Transverse colon (tissue), 4 donors: ENCODE measurements at regions of chr11 and their contacts with region 1.

Region 1: DNA sequence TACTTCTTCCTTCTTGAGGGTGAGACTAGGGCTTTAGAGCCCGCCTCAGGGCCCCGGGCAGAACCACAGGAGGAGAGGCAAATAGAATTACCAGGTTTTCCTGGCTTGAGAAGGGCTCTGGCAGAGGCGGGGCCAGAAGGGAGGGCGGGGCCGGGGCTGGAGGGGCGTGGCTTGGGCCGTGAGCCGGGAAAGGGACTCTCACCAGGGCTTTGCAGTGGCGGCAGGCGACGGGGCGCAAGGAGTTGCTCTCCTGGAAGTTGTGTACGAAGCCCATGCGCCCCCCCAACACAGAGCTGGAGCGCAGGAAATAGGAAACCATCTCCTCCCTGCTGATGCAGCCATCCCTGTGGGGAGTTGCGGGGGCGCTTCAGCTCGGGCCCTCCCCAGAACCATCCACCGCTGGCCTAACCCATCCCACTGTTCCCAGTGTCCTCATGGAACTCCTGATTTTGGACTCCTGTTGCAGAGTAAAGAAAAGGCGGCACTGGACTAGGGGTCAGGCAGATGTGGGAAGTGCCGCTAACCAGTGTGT is 6.9 kb upstream of the NRXN2 start:
- DNase-seq: peak; percentile 44
- H3K4me3 ChIP-seq: no peak overlapping the region
- H3K27ac ChIP-seq: no peak overlapping the region
- H3K4me1 ChIP-seq: peaks cover 0 to 4% (median 1%) of the 10 kb centered on the region in 4 donors
- H3K27me3 ChIP-seq: peaks cover 8% of the 10 kb centered on the region
- CTCF ChIP-seq: no peak
- EP300 ChIP-seq: no peak
- POLR2A ChIP-seq: no peak

Region 2: DNA sequence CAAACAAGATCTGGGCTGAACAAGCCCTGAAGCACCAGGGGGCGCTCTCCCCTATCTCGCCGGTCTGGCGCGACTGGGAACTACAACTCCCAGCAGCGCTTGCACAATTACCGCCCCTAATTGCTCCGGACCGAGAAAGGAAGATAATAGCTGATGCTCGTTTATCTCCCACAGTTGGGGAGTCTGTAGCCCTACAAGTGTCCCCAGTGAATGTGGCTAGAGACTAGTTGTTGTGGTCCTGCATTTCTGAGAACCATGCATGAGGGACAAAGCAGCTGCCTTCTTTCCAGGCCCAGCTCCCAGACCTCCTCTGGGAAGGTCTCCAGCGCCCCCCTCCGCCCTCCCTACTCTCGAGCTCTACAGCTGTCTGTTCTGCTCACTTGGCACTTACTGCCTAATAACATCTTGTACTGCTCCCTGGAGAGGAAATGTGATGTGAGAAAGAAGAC is 41.4 kb before region 1 on chr11:
- in situ Hi-C with region 1: no loop called
- intact Hi-C with region 1: loop called (anchors 5 kb)
- DNase-seq: peak; percentile 89
- H3K4me3 ChIP-seq: peak overlapping the region in 3 of 4 donors; percentile 11 to 50 (median 30)
- H3K27ac ChIP-seq: peak overlapping the region; percentile 46 to 77 (median 57)
- H3K4me1 ChIP-seq: peaks cover 0 to 16% (median 8%) of the 10 kb centered on the region in 4 donors
- H3K27me3 ChIP-seq: peaks cover 15% of the 10 kb centered on the region
- CTCF ChIP-seq: peak; percentile 87 to 95 (median 94)
- EP300 ChIP-seq: no peak
- POLR2A ChIP-seq: no peak